Naive thymus-derived CD4-positive, alpha-beta T cell (primary cell): ENCODE measurements at regions of chr22 and their contacts with region 1.

Region 1: GRCh38 chr22:37862570-37863325 is 13.5 kb downstream of the EIF3L start:
- DNase-seq: no peak
- ATAC-seq: no peak
- H3K4me3 ChIP-seq: no peak overlapping the region
- H3K4me3 Mint-ChIP-seq: no peak overlapping the region
- H3K27ac ChIP-seq: no peak overlapping the region
- H3K27ac Mint-ChIP-seq: peak overlapping the region in 3 of 9 donors; percentile 13 to 82 (median 76)
- H3K4me1 ChIP-seq: peaks cover 0 to 2% of the 10 kb centered on the region in 2 donors
- H3K4me1 Mint-ChIP-seq: peaks cover 5 to 10% (median 6%) of the 10 kb centered on the region in 7 donors
- H3K27me3 ChIP-seq: no peaks in the 10 kb centered on the region
- H3K27me3 Mint-ChIP-seq: no peaks in the 10 kb centered on the region

Region 2: GRCh38 chr22:37538590-37539357 is 324.0 kb before region 1 on chr22:
- CTCF ChIA-PET with region 1: interaction called, 3 read pairs
- POLR2A ChIA-PET with region 1: no interaction called
- intact Hi-C with region 1: loop called (anchors 1 to 2 kb)
- DNase-seq: peak; percentile 78 to 90 (median 87)
- ATAC-seq: peak; percentile 99
- H3K4me3 ChIP-seq: no peak overlapping the region
- H3K4me3 Mint-ChIP-seq: peak overlapping the region; percentile 15 to 64 (median 48)
- H3K27ac ChIP-seq: no peak overlapping the region
- H3K27ac Mint-ChIP-seq: peak overlapping the region in 5 of 9 donors; percentile 1 to 37 (median 7)
- H3K4me1 ChIP-seq: peaks cover 8 to 14% of the 10 kb centered on the region in 2 donors
- H3K4me1 Mint-ChIP-seq: peaks cover 14 to 44% (median 17%) of the 10 kb centered on the region in 7 donors
- H3K27me3 ChIP-seq: peaks cover 0 to 4% of the 10 kb centered on the region in 2 donors
- H3K27me3 Mint-ChIP-seq: peaks cover 4 to 18% (median 12%) of the 10 kb centered on the region in 5 donors

Region 3: DNA sequence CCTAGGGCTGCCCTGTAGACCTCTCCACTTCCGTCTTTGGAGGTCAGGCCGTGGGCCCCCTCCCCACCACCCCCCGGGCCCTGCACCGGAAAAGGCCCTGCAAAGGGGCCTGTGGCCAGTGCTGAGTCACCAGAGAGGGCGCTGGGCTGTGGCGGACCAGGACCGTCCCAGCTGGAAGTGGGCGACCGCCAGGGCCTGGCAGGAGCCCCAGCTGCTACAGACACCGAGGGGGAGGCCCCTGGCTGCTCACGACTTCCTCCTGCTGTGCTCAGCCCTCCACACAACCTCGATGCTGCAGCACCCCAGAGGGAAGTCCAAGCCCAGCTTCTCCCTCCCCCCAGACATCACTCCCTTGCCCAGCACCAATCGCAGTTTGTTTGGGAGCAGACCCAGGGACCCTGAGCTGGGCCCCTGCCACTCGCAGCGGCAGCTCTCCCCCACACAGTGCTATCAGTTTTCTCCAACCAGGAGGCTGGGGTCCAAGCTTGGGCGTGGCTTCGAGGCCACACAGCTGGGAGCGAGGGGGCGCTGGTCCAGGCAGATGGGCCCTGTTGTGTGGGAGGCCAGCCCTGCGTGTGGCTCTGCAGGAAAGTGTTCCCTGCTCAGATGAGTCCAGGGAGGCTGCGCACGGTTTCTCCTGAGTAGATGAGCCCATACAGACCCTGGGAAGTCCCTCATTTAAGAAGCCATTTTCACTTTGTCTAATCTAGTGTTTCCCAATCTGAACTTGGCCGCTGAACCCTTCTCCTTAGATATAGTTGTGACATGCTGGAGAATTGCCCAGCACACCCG is 228.9 kb before region 1 on chr22:
- CTCF ChIA-PET with region 1: interaction called, 11 read pairs
- POLR2A ChIA-PET with region 1: no interaction called
- intact Hi-C with region 1: no loop called
- DNase-seq: peak in 5 of 9 donors; percentile 25 to 68 (median 37)
- ATAC-seq: peak; percentile 81
- H3K4me3 ChIP-seq: peak overlapping the region; percentile 53
- H3K4me3 Mint-ChIP-seq: peak overlapping the region; percentile 18 to 80 (median 70)
- H3K27ac ChIP-seq: peak overlapping the region; percentile 71
- H3K27ac Mint-ChIP-seq: peak overlapping the region; percentile 86 to 98 (median 93)
- H3K4me1 ChIP-seq: peaks cover 55 to 72% of the 10 kb centered on the region in 2 donors
- H3K4me1 Mint-ChIP-seq: peaks cover 23 to 70% (median 64%) of the 10 kb centered on the region in 7 donors
- H3K27me3 ChIP-seq: no peaks in the 10 kb centered on the region
- H3K27me3 Mint-ChIP-seq: no peaks in the 10 kb centered on the region

Region 4: DNA sequence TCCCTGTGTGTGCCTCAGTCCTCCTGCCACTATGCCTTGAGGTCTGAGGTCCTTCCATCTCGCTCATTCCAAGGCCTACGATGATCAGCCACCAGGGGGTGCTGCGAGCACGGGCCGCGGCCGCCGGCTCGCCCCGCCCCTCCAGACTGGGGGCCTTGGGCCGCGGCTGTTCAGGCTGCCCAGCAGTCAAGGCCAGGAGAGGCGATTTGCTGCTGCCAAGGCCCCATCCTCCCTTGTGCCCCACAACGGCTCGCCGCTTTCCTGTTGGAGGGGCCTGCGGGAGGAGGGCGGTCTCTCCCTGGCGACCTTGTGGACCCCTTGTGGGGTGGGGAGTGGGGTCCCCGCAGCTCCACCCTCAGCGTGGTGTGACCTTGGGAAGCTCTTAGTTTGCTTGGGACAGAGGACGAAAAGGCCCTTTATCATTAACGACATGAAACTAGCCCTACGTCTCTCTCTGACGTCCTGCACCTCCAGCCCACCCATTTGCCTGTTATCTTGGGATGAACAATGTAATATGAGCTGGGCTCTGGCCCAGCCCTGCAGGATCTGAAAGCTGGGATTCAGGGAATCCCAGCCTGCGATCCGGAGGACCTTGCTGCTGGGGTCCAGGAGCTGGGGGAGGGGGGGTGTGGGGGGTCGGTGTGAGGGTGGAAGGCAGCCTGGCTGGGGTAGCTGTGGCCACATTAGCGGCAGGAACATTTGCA is 44.9 kb before region 1 on chr22:
- CTCF ChIA-PET with region 1: interaction called, 94 read pairs
- POLR2A ChIA-PET with region 1: interaction called, 6 read pairs
- intact Hi-C with region 1: loop called (anchors 1 kb)
- DNase-seq: peak; percentile 44 to 92 (median 72)
- ATAC-seq: peak; percentile 92
- H3K4me3 ChIP-seq: peak overlapping the region; percentile 61
- H3K4me3 Mint-ChIP-seq: peak overlapping the region in 9 of 10 donors; percentile 34 to 74 (median 52)
- H3K27ac ChIP-seq: no peak overlapping the region
- H3K27ac Mint-ChIP-seq: no peak overlapping the region
- H3K4me1 ChIP-seq: peaks cover 10% of the 10 kb centered on the region in 2 donors
- H3K4me1 Mint-ChIP-seq: peaks cover 0 to 16% (median 11%) of the 10 kb centered on the region in 7 donors
- H3K27me3 ChIP-seq: no peaks in the 10 kb centered on the region
- H3K27me3 Mint-ChIP-seq: peaks cover 9 to 33% (median 20%) of the 10 kb centered on the region in 5 donors

Region 5: DNA sequence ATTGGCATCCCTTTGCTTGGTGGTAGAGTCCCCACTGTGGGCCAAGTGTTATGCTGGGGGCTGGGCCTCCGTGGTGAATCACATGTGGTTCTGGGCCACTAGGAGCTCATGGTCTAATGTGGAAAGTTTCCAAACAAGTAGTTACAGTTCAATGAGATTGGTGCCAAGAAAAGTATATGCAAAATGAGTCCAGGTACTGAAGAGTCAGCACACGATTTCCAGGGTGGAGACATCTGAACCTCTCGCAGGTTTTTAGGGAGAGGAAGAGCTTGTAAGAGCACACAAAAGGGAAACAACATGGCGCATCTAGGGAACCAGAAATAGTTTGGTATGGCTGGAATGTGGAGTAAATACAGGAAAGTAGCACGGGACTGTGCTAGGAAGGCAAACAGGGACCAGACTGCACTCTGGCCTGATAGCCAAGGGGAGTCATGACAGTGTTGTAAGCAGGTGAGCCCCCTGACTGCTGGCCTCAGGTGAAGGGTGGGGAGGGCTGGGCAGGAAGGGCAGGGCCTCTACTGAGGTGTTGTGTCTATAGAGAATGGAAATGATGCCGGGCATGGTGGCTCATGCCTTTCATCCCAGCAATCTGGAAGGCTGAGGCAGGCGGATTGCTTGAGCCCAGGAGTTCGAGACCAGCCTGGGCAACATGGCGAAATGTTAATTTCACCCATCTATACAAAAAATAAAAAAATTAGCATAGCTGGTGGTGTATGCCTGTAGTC is 103.4 kb after region 1 on chr22:
- CTCF ChIA-PET with region 1: interaction called, 3 read pairs
- POLR2A ChIA-PET with region 1: no interaction called
- intact Hi-C with region 1: loop called in 1 of 2 experiments (anchors 1 kb)
- DNase-seq: no peak
- ATAC-seq: no peak
- H3K4me3 ChIP-seq: no peak overlapping the region
- H3K4me3 Mint-ChIP-seq: no peak overlapping the region
- H3K27ac ChIP-seq: no peak overlapping the region
- H3K27ac Mint-ChIP-seq: no peak overlapping the region
- H3K4me1 ChIP-seq: no peaks in the 10 kb centered on the region
- H3K4me1 Mint-ChIP-seq: peaks cover 2 to 14% (median 5%) of the 10 kb centered on the region in 7 donors
- H3K27me3 ChIP-seq: no peaks in the 10 kb centered on the region
- H3K27me3 Mint-ChIP-seq: no peaks in the 10 kb centered on the region